A673 (cell line): ENCODE measurements at regions of chr9 and their contacts with region 1.

Region 1: GRCh38 chr9:115733318-115734110 is 420.1 kb upstream of the PAPPA start:
- DNase-seq: peak; percentile 26
- H3K4me3 ChIP-seq: no peak overlapping the region
- H3K27ac ChIP-seq: no peak overlapping the region
- H3K4me1 ChIP-seq: peaks cover 18% of the 10 kb centered on the region
- H3K27me3 ChIP-seq: no peaks in the 10 kb centered on the region
- CTCF ChIP-seq: no peak

Region 2: GRCh38 chr9:114662081-114662989 is 1071.2 kb before region 1 on chr9:
- CTCF ChIA-PET with region 1: no interaction called
- POLR2A ChIA-PET with region 1: no interaction called
- intact Hi-C with region 1: loop called (anchors 5 kb)
- DNase-seq: peak; percentile 71
- H3K4me3 ChIP-seq: no peak overlapping the region
- H3K27ac ChIP-seq: no peak overlapping the region
- H3K4me1 ChIP-seq: no peaks in the 10 kb centered on the region
- H3K27me3 ChIP-seq: no peaks in the 10 kb centered on the region
- CTCF ChIP-seq: peak; percentile 87

Region 3: GRCh38 chr9:115690786-115691496 is 42.6 kb before region 1 on chr9:
- CTCF ChIA-PET with region 1: no interaction called
- POLR2A ChIA-PET with region 1: no interaction called
- intact Hi-C with region 1: no loop called
- DNase-seq: peak; percentile 40
- H3K4me3 ChIP-seq: no peak overlapping the region
- H3K27ac ChIP-seq: no peak overlapping the region
- H3K4me1 ChIP-seq: peaks cover 26% of the 10 kb centered on the region
- H3K27me3 ChIP-seq: no peaks in the 10 kb centered on the region
- CTCF ChIP-seq: no peak